GM12878 (cell line): ENCODE measurements at regions of chr9 and their contacts with region 1.

Region 1: GRCh38 chr9:22008736-22009562 is at the start of gene CDKN2B:
- DNase-seq: no peak
- ATAC-seq: peak; percentile 98
- H3K4me3 ChIP-seq: peak within 1 kb of the TSS; percentile 66
- H3K27ac ChIP-seq: no peak within 1 kb of the TSS
- H3K4me1 ChIP-seq: peaks cover 10% of the 10 kb centered on the region
- H3K27me3 ChIP-seq: peaks cover 0 to 2% of the 10 kb centered on the region in 2 experiments; a peak in 1 of 4 replicates
- CTCF ChIP-seq: peak; percentile 87 to 88 (median 87)
- EP300 ChIP-seq: no peak
- POLR2A ChIP-seq: peak; percentile 59
- RAD21 ChIP-seq: peak; percentile 65
- polyA plus RNA-seq, gene CDKN2B: 0.04 to 0.08 TPM

Region 2: DNA sequence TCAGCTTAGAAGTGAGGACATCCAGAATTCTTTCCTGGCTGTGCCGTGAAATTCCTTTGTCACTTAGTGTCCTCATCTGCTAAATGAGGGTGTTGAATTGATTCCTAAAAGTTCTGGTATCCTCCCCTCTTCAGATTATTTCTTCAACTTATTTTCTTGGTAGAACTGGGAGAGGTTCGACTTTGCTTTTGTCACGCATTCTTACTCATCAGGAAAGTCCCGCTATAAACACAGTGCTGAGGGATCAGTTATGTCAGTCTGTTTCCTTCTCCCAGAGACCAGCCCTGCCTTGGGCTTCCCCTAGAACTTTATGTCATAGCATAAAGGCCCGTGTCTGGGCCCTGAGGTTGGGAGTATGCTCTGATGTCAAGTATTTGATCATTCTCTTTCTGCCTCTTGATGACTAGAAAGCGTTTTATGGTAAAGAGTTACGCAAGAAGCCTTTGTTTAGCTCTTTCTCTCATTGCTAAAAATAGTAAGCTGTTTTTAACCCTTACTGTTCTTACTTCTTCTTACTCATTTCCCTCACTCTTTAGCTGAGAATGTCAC is 176.9 kb before region 1 on chr9:
- CTCF ChIA-PET with region 1: interaction called, 20 read pairs
- POLR2A ChIA-PET with region 1: no interaction called
- RAD21 ChIA-PET with region 1: interaction called, 7 read pairs
- SMC1A ChIA-PET with region 1: interaction called, 11 read pairs
- in situ Hi-C with region 1: no loop called
- intact Hi-C with region 1: loop called (anchors 5 kb)
- DNase-seq: peak; percentile 71
- ATAC-seq: peak; percentile 88
- H3K4me3 ChIP-seq: peak overlapping the region; percentile 24; the same call in 1 of the 2 replicates
- H3K27ac ChIP-seq: peak overlapping the region; percentile 77
- H3K4me1 ChIP-seq: peaks cover 38% of the 10 kb centered on the region
- H3K27me3 ChIP-seq: no peaks in the 10 kb centered on the region
- CTCF ChIP-seq: no peak
- EP300 ChIP-seq: peak; percentile 62 to 71; a peak in 2 of 4 replicates
- POLR2A ChIP-seq: no peak
- RAD21 ChIP-seq: no peak

Region 3: DNA sequence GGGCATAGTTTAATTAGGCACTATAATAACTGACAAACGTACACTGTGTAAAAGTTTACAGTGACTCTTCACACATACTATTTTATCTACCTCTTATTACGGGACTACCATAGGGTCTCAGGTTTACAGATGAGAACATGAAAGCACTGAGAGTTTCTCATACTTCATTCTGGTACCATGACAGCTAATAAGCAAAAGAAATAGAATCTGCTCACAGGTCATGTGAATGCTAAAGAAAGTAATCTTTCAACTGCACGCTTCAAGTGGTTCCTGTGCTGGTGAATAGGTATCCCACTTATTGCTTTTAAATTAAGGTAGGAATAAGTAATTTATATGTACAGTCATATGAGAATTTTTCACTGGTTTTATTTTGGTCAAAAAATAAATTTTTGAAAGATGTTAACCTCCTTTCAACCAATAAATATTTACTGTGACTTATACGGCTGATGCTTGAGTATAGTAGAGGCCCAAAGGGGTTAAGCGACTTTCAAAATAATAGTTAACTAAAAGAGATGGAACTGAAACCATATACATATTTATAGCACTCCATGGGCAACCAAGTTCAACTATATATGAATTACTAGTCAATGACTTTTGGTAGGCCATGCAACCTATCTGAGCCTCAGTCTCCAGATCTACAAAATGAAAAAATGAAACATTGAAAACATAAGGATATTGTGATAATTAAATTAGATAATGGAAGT is 22.8 kb before region 1 on chr9:
- CTCF ChIA-PET with region 1: interaction called, 54 read pairs
- POLR2A ChIA-PET with region 1: no interaction called
- RAD21 ChIA-PET with region 1: interaction called, 8 read pairs
- SMC1A ChIA-PET with region 1: interaction called, 14 read pairs
- in situ Hi-C with region 1: no loop called
- intact Hi-C with region 1: no loop called
- DNase-seq: no peak
- ATAC-seq: peak; percentile 53
- H3K4me3 ChIP-seq: no peak overlapping the region
- H3K27ac ChIP-seq: no peak overlapping the region
- H3K4me1 ChIP-seq: no peaks in the 10 kb centered on the region
- H3K27me3 ChIP-seq: 0 out of 4 replicates have a peak, but pooled peaks cover 0 to 3% of the 10 kb centered on the region in 2 experiments
- CTCF ChIP-seq: no peak
- EP300 ChIP-seq: no peak
- POLR2A ChIP-seq: no peak
- RAD21 ChIP-seq: no peak

Region 4: DNA sequence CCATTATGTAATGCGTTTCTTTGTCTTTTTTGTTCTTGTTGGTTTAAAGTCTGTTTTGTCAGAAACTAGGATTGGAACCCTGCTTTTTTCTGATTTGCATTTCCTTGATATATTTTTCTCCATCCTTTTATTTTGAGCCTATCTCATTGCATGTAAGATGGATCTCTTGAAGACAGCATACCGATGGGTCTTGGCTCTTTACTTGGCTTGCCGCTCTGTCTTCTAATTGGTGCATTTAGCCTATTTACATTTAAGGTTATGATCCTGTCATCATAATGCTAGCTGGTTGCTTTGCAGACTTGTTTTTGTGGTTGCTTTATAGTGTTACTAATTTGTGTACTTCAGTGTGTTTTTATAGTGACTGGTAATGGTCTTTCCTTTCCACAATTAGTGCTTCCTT is 13.4 kb after region 1 on chr9:
- CTCF ChIA-PET with region 1: interaction called, 10 read pairs
- POLR2A ChIA-PET with region 1: no interaction called
- RAD21 ChIA-PET with region 1: no interaction called
- SMC1A ChIA-PET with region 1: interaction called, 4 read pairs
- in situ Hi-C with region 1: no loop called
- intact Hi-C with region 1: no loop called
- DNase-seq: no peak
- ATAC-seq: no peak
- H3K4me3 ChIP-seq: no peak overlapping the region
- H3K27ac ChIP-seq: no peak overlapping the region
- H3K4me1 ChIP-seq: no peaks in the 10 kb centered on the region
- H3K27me3 ChIP-seq: no peaks in the 10 kb centered on the region; a peak in 1 of 4 replicates
- CTCF ChIP-seq: no peak
- EP300 ChIP-seq: no peak
- POLR2A ChIP-seq: no peak
- RAD21 ChIP-seq: no peak

Region 5: DNA sequence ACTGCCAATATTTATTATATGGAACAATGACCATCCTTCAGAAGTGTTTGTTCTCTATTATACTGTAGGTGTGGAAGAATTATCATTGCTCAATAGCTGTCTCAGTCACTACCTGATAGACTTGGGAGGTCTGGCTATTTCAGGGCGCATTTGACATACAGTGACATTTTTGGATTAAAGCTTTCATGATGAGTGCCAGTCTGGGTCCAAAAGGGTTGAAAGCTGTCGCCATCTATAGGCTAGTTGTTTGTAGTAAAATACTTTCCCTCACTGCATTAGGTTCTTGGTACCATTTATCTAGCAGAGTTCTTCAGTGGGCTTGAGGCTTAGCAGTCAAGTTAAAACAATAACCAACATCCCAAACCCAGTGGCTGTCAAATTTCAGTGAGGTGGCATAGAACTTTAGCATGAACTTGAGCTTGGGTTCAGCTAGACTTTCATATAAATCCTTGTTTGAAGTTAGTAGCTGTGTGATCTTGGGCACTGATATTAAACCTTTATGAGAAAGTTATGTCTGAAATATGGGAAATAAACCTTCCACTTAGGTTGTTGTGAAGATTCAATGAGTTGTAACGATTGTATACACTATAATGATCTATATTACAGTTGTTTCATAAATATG is 110.7 kb after region 1 on chr9:
- CTCF ChIA-PET with region 1: interaction called, 33 read pairs
- POLR2A ChIA-PET with region 1: no interaction called
- RAD21 ChIA-PET with region 1: interaction called, 4 read pairs
- SMC1A ChIA-PET with region 1: interaction called, 7 read pairs
- in situ Hi-C with region 1: no loop called
- intact Hi-C with region 1: no loop called
- DNase-seq: no peak
- ATAC-seq: peak; percentile 76
- H3K4me3 ChIP-seq: no peak overlapping the region
- H3K27ac ChIP-seq: no peak overlapping the region
- H3K4me1 ChIP-seq: no peaks in the 10 kb centered on the region
- H3K27me3 ChIP-seq: peaks cover 0 to 8% of the 10 kb centered on the region in 2 experiments; a peak in 2 of 4 replicates
- CTCF ChIP-seq: peak; percentile 39 to 58 (median 55); a peak in 5 of 6 replicates
- EP300 ChIP-seq: no peak
- POLR2A ChIP-seq: no peak
- RAD21 ChIP-seq: peak; percentile 68